ENCODE measurements at regions of chrX and their contacts with region 1.

Region 1: DNA sequence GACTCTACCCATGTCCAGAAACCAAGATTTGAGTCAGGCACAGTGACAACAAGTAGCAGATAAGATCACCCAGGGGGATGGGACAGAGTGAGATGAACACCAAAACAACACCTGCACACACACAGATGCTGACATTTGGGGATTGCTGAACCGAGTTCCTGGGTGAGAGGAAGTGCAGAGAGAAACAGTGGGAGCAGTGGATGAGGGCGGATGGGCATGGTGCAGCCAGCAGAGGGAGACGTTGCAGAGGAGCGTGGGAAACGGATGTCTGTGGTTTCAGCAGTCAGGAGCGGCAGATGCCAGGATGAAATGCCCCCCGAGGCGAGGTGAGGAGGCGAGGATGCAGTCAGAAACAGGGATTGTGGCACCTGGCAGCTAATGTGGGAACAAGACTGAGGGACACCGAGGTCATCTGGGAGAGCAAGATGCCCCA is 78.6 kb upstream of the STS start:
- DNase-seq: peak in 2 of 9 experiments; percentile 22 to 48
- ATAC-seq: no peak
- H3K4me3 ChIP-seq: no peak overlapping the region
- H3K4me3 Mint-ChIP-seq: peak overlapping the region; percentile 53
- H3K27ac ChIP-seq: no peak overlapping the region
- H3K27ac Mint-ChIP-seq: peak overlapping the region; percentile 57
- H3K4me1 ChIP-seq: peaks cover 11% of the 10 kb centered on the region
- H3K4me1 Mint-ChIP-seq: peaks cover 31% of the 10 kb centered on the region
- H3K27me3 ChIP-seq: no peaks in the 10 kb centered on the region
- H3K27me3 Mint-ChIP-seq: no peaks in the 10 kb centered on the region
- CTCF ChIP-seq: no peak

Region 2: GRCh38 chrX:7028246-7028645 is 40.7 kb before region 1 on chrX:
- CTCF ChIA-PET with region 1: no interaction called
- POLR2A ChIA-PET with region 1: no interaction called
- intact Hi-C with region 1: no loop called
- DNase-seq: no peak
- ATAC-seq: no peak
- H3K4me3 ChIP-seq: no peak overlapping the region
- H3K4me3 Mint-ChIP-seq: no peak overlapping the region
- H3K27ac ChIP-seq: no peak overlapping the region
- H3K27ac Mint-ChIP-seq: no peak overlapping the region
- H3K4me1 ChIP-seq: no peaks in the 10 kb centered on the region
- H3K4me1 Mint-ChIP-seq: no peaks in the 10 kb centered on the region
- H3K27me3 ChIP-seq: no peaks in the 10 kb centered on the region
- H3K27me3 Mint-ChIP-seq: no peaks in the 10 kb centered on the region
- CTCF ChIP-seq: no peak

Region 3: DNA sequence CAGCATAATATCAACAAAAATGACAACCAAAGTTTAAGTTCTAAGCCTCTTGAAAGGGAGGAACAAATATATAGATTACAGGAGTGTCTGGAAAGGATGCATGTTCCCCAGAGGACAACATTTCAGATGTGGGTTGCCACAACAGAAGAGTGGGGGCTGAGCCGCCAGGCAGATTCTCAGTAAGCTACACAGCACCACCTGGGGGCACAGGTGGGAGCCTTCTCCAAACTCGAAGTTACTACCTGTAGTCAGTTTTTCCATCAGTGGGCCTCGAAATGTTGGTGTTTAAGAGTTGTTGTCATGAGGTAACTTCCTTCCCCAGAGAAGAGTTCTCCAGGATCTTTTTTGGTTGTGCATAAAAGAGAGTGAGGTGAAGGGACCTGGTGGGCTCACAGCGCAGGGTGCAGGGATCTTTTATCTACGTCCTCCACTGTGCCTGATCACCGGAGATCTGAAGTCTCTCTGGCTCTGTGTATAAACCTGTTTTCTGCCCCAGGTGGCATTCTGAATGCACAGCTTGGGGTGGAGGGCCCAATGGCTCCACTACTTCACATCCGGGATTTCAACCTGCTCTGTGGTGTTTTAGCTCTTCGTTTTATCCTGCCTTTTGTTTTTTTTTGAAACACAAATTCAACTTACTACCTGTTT is 20.1 kb after region 1 on chrX:
- CTCF ChIA-PET with region 1: no interaction called
- POLR2A ChIA-PET with region 1: no interaction called
- intact Hi-C with region 1: loop called in 1 of 2 experiments (anchors 2 kb)
- DNase-seq: peak in 7 of 9 experiments; percentile 18 to 68 (median 50)
- ATAC-seq: peak; percentile 53
- H3K4me3 ChIP-seq: no peak overlapping the region
- H3K4me3 Mint-ChIP-seq: no peak overlapping the region
- H3K27ac ChIP-seq: no peak overlapping the region
- H3K27ac Mint-ChIP-seq: peak overlapping the region; percentile 86
- H3K4me1 ChIP-seq: peaks cover 23% of the 10 kb centered on the region
- H3K4me1 Mint-ChIP-seq: peaks cover 52% of the 10 kb centered on the region
- H3K27me3 ChIP-seq: no peaks in the 10 kb centered on the region
- H3K27me3 Mint-ChIP-seq: no peaks in the 10 kb centered on the region
- CTCF ChIP-seq: peak; percentile 28

Region 4: DNA sequence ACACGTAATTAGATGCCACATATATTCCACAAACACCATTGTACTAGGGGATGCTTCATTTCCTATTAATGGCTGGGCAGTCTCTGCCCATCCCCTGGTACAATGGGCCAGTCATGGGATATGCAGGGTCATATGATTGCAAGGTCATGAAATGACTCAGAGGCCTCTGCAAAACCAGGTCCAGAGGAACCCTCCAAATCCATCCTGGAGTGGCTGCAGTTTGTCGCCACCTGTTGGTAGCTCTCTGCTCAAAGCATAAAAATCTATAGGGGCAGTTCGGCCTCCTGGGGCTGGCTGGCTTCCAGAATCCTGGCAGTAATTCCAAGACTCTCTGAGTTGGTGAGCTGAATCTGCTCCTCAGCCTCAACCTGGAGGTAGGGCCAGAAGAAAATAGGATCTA is 101.9 kb after region 1 on chrX:
- CTCF ChIA-PET with region 1: no interaction called
- POLR2A ChIA-PET with region 1: no interaction called
- intact Hi-C with region 1: loop called in 1 of 2 experiments (anchors 5 kb)
- DNase-seq: peak in 8 of 9 experiments; percentile 7 to 62 (median 32)
- ATAC-seq: no peak
- H3K4me3 ChIP-seq: no peak overlapping the region
- H3K4me3 Mint-ChIP-seq: no peak overlapping the region
- H3K27ac ChIP-seq: no peak overlapping the region
- H3K27ac Mint-ChIP-seq: no peak overlapping the region
- H3K4me1 ChIP-seq: no peaks in the 10 kb centered on the region
- H3K4me1 Mint-ChIP-seq: no peaks in the 10 kb centered on the region
- H3K27me3 ChIP-seq: no peaks in the 10 kb centered on the region
- H3K27me3 Mint-ChIP-seq: no peaks in the 10 kb centered on the region
- CTCF ChIP-seq: peak; percentile 28

Region 5: DNA sequence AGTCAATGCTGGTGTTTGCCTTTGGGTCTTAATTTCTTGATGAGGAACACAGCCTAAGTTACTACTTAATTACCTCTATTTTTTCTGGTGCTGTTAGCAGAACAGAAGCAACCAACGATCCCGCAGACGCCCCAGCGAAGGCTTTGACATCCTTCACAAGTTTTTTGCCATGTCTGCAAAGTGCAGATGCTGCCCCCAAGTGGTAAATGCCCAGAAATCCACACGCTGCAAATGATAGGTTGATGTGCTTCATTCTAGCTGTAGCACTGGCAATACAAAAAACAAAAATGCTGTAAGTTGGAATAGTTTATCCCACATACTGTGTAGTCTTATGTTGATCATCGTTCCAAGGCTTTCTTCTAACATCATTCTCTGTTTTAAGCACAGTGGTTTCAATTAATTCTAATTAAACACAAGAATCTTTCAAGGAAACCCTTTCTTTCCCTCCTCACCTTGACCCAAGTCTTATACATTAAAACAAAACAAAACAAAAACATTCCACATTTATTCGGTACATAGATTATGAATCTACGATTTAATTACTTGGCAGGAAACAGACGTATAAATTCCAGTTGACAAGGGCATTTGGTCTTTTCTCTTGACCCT is 857.0 kb after region 1 on chrX:
- CTCF ChIA-PET with region 1: no interaction called
- POLR2A ChIA-PET with region 1: no interaction called
- intact Hi-C with region 1: loop called in 1 of 2 experiments (anchors 5 kb)
- DNase-seq: peak; percentile 20 to 77 (median 63)
- ATAC-seq: peak; percentile 50
- H3K4me3 ChIP-seq: no peak overlapping the region
- H3K4me3 Mint-ChIP-seq: peak overlapping the region; percentile 90
- H3K27ac ChIP-seq: no peak overlapping the region
- H3K27ac Mint-ChIP-seq: no peak overlapping the region
- H3K4me1 ChIP-seq: peaks cover 8% of the 10 kb centered on the region
- H3K4me1 Mint-ChIP-seq: peaks cover 17% of the 10 kb centered on the region
- H3K27me3 ChIP-seq: no peaks in the 10 kb centered on the region
- H3K27me3 Mint-ChIP-seq: no peaks in the 10 kb centered on the region
- CTCF ChIP-seq: peak; percentile 59